Astrocyte of the cerebellum (primary cell): ENCODE measurements at regions of chr1 and their contacts with region 1.

Region 1: DNA sequence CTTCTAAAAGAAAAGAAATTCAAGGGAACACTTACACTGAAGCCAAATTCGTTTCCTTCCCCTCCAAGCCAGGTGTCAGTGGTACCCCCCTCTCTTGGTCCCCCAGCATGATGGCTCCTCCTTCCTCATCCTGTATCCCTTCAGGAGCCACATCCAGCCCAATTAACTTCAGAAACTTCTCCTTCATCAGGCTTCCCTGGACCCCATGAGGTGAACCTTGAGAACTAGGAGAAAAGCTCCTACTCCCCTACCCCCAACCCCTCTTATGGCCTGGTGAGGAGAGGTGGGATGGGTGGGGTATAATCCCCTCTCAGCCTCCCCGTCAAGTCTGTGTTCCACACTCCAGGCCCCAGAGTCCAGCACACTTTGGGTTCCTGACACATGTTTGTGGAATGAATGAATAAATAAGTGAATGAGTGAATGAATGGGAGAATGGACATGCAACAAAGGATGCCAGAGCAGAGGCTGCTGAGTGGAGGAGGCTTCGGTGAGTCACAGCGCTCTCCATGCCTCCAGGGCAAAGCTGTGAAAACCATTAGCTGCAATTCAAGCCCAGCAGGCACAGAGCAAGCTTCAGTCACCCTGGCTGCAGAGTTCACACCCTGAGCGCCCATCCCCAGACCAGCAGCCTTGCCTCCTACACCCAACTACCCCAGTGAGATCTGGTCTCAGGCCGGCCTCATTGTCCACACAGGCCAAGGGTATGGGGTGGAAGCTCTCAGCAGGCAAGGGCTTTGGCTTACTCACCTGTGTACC is 43.8 kb downstream of the BATF3 start:
- DNase-seq: no peak
- H3K4me3 ChIP-seq: no peak overlapping the region
- CTCF ChIP-seq: no peak

Region 2: DNA sequence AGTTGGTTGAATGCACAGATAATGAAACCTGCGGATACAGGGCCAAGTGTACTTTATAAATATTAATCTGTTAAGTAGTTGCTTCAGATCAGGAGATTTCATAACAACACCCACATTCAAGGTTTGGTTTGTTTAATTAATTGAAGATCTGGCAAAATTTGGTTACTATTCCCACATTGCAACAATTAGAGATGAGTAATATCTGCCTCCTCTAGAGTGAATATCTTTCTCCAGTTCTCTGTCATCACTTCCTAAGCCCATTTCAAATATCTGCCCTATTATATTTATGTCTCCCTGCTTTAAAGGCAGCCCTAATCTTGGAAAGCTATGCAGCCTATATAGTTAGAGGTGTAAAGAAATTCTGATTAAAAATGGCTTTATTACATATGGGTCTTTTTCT is 309.2 kb before region 1 on chr1:
- in situ Hi-C with region 1: no loop called
- DNase-seq: no peak
- H3K4me3 ChIP-seq: no peak overlapping the region
- CTCF ChIP-seq: no peak

Region 3: GRCh38 chr1:212595787-212596714 is 59.8 kb before region 1 on chr1:
- in situ Hi-C with region 1: no loop called
- DNase-seq: peak; percentile 93
- H3K4me3 ChIP-seq: no peak overlapping the region
- CTCF ChIP-seq: peak; percentile 46

Region 4: GRCh38 chr1:212738330-212738729 is 82.5 kb after region 1 on chr1:
- in situ Hi-C with region 1: no loop called
- DNase-seq: peak; percentile 53
- H3K4me3 ChIP-seq: no peak overlapping the region
- CTCF ChIP-seq: no peak

Region 5: GRCh38 chr1:212782422-212783154 is 126.7 kb after region 1 on chr1:
- in situ Hi-C with region 1: loop called (anchors 5 kb)
- DNase-seq: no peak
- H3K4me3 ChIP-seq: no peak overlapping the region
- CTCF ChIP-seq: peak; percentile 26